ENCODE measurements at regions of chr5 and their contacts with region 1.

Region 1: DNA sequence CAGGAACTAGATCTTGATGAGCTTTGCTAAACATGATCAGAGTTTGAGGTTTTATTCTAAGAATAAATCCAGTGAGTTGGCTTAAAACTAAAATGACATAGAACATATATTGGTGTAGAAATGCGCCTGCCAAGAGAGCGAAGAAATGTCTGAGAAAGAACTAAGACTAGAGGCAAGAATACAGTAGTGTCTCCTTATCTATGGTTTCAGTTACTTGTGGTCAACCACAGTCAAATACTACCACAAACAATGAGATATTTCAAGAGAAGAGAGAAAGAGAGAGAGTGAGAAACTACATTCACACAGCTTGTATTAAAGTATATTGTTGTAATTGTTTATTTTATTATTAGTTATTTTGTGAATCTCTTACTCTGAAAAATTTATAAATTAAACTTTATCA is 254.4 kb upstream of the CDH10 start:
- DNase-seq: no peak

Region 2: DNA sequence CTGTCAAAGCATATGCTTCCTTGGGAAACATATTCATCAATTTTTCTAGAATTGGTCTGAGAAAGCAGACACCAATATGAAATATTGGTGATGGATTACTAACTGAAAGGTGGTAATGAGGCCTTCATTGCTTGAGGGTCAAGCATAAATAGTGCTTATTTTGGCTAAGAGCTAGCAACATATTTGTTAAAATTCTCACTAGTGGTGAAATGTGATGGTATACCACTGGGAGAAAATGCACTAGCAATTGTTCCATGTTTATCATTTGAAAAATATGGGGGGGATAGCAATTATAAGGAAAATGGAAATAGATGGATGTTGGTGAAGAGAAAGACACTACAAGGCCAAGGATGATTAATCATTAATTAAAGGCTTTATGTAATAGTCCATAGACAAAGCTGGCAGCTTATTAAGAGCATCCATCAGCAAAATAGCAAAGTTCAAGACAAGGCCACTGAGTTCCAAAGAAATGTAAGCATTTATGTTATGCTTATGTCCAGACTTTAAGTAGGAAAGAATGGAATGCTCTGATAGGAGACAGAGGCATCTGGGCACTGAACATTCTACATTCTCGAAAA is 1645.5 kb before region 1 on chr5:
- intact Hi-C with region 1: loop called in 1 of 2 experiments (anchors 5 kb)
- DNase-seq: no peak

Region 3: GRCh38 chr5:24823625-24824024 is 75.6 kb before region 1 on chr5:
- intact Hi-C with region 1: no loop called
- DNase-seq: no peak

Region 4: GRCh38 chr5:24923400-24923799 is 24.2 kb after region 1 on chr5:
- intact Hi-C with region 1: no loop called
- DNase-seq: no peak

Region 5: DNA sequence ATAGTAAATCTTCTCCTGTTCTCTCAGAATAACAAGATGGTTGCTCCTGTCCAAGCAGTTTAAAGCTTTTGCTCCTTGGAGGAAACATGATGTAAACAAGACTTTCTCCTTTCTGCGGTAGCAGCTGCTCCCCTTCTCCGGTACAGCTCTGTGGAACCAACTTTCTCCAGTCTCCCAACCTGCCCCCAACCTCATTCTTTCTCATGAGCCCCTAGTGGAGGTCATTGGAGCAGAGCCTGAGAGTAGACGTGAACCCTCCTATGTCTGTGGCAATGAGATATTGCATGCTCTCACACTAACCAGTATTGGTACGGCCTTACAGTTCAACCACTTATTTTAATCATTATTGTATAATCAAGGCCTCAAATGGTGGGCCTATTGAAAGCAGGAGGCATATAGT is 229.4 kb after region 1 on chr5:
- intact Hi-C with region 1: no loop called
- DNase-seq: no peak